Pancreas (tissue), 10 donors: ENCODE measurements at regions of chr21 and their contacts with region 1.

Region 1: DNA sequence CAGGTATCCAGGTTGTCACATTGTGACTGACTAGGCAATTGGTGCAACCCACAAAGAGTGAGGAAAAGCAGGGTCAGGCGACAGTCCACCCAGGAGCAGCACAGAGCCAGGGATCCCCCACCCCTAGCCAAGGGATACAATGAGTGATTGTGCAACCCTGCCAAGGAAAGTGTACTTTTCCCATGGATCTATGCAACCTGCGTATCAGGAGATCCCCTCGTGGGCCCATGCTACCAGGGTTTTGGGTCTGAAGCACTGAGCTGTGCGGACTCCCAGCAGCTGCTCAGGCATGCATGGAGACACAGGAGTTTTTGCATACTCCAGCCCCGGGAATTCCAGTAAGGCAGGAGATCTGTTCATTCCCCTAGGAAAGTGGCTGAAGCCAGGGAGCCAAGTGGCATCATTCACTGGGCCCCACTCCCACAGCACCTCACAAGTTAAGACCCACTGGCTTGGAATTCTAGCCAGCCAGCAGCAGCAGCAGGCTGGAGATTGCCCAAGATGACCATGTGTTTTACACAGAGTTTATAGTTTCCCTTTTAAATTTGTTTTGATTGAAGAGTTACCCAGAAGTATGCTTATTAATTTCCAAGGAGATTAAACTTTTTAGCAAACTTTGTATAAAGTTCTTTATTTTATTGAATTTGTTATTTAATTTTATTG is 136.0 kb downstream of the LTN1 start:
- DNase-seq: no peak
- ATAC-seq: no peak
- H3K4me3 ChIP-seq: no peak overlapping the region
- H3K27ac ChIP-seq: no peak overlapping the region
- H3K4me1 ChIP-seq: no peaks in the 10 kb centered on the region
- H3K27me3 ChIP-seq: no peaks in the 10 kb centered on the region
- CTCF ChIP-seq: no peak

Region 2: GRCh38 chr21:28598214-28598613 is 258.5 kb before region 1 on chr21:
- intact Hi-C with region 1: no loop called
- DNase-seq: no peak
- ATAC-seq: no peak
- H3K4me3 ChIP-seq: no peak overlapping the region
- H3K27ac ChIP-seq: no peak overlapping the region
- H3K4me1 ChIP-seq: no peaks in the 10 kb centered on the region
- H3K27me3 ChIP-seq: no peaks in the 10 kb centered on the region
- CTCF ChIP-seq: no peak

Region 3: GRCh38 chr21:28793043-28793442 is 63.7 kb before region 1 on chr21:
- intact Hi-C with region 1: loop called in 1 of 3 experiments (anchors 10 kb)
- DNase-seq: no peak
- ATAC-seq: no peak
- H3K4me3 ChIP-seq: no peak overlapping the region
- H3K27ac ChIP-seq: no peak overlapping the region
- H3K4me1 ChIP-seq: no peaks in the 10 kb centered on the region
- H3K27me3 ChIP-seq: no peaks in the 10 kb centered on the region
- CTCF ChIP-seq: no peak

Region 4: DNA sequence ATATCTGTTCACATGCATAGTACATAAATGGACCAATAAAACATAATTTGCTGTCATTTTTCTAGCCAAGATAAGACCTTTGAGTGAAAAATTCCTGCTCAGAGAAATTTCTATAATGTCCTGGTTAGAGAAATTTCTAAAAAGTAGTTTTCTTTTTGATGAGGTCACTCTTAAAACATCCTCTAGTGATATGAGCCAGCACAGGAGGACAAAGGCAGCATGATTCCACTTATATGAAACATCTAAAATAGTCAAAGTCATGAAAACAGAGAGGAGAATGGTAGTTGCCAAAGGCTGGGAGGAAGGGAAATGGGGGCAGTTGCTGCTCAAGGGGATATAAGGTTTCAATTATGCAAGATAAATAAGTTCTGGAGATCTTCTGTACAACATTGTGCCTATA is 681.4 kb after region 1 on chr21:
- intact Hi-C with region 1: no loop called
- DNase-seq: no peak
- ATAC-seq: no peak
- H3K4me3 ChIP-seq: no peak overlapping the region
- H3K27ac ChIP-seq: no peak overlapping the region
- H3K4me1 ChIP-seq: peaks cover 0 to 12% (median 0%) of the 10 kb centered on the region in 3 donors
- H3K27me3 ChIP-seq: no peaks in the 10 kb centered on the region
- CTCF ChIP-seq: no peak